GM12878 (cell line): ENCODE measurements at regions of chr16 and their contacts with region 1.

Region 1: GRCh38 chr16:58843675-58844074 is 109.6 kb upstream of the GOT2 start:
- DNase-seq: peak; percentile 12
- ATAC-seq: peak; percentile 81
- H3K4me3 ChIP-seq: no peak overlapping the region
- H3K27ac ChIP-seq: no peak overlapping the region
- H3K4me1 ChIP-seq: no peaks in the 10 kb centered on the region
- H3K27me3 ChIP-seq: no peaks in the 10 kb centered on the region
- CTCF ChIP-seq: peak in 1 of 3 experiments; percentile 12; a peak in 1 of 6 replicates
- EP300 ChIP-seq: no peak
- POLR2A ChIP-seq: no peak
- RAD21 ChIP-seq: peak; percentile 66

Region 2: DNA sequence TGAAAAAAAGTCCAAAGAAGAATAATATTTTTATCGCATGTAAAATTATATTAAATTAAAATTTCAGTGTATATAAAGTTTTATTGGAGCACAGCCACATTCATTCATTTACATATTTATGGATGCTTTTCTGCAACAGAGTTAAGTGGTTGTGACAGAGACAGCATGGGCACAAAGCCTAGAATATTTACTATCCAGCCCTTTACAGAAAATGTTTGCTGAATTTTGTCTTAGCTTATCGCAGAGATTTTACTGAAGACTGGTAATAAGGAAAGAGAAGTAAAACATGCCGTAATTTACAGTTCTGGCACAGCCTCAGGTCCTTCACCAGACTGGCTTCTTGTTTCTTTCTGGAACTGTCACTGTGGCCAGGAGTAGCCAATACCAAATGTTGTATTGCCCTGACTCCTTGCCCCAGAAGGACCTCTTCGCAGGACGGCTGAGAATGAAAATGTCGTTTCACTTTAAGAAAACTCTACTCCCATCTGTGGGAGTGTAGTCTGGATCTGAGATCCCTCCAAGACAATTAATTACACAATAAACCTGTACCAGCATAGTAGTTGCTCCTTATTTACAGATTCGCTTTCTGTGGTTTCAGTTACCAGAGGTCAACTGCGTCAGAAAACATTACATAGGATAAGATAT is 14.7 kb before region 1 on chr16:
- CTCF ChIA-PET with region 1: interaction called, 5 read pairs
- POLR2A ChIA-PET with region 1: no interaction called
- RAD21 ChIA-PET with region 1: interaction called, 4 read pairs
- SMC1A ChIA-PET with region 1: interaction called, 12 read pairs
- in situ Hi-C with region 1: no loop called
- intact Hi-C with region 1: no loop called
- DNase-seq: no peak
- ATAC-seq: no peak
- H3K4me3 ChIP-seq: no peak overlapping the region
- H3K27ac ChIP-seq: no peak overlapping the region
- H3K4me1 ChIP-seq: no peaks in the 10 kb centered on the region
- H3K27me3 ChIP-seq: no peaks in the 10 kb centered on the region
- CTCF ChIP-seq: no peak
- EP300 ChIP-seq: no peak
- POLR2A ChIP-seq: no peak
- RAD21 ChIP-seq: no peak

Region 3: GRCh38 chr16:58859958-58860669 is 16.4 kb after region 1 on chr16:
- CTCF ChIA-PET with region 1: interaction called, 55 read pairs
- POLR2A ChIA-PET with region 1: no interaction called
- RAD21 ChIA-PET with region 1: interaction called, 29 read pairs
- SMC1A ChIA-PET with region 1: interaction called, 21 read pairs
- in situ Hi-C with region 1: no loop called
- intact Hi-C with region 1: no loop called
- DNase-seq: no peak
- ATAC-seq: no peak
- H3K4me3 ChIP-seq: no peak overlapping the region
- H3K27ac ChIP-seq: no peak overlapping the region
- H3K4me1 ChIP-seq: no peaks in the 10 kb centered on the region
- H3K27me3 ChIP-seq: no peaks in the 10 kb centered on the region
- CTCF ChIP-seq: no peak
- EP300 ChIP-seq: no peak
- POLR2A ChIP-seq: no peak
- RAD21 ChIP-seq: no peak

Region 4: GRCh38 chr16:59047114-59047513 is 203.4 kb after region 1 on chr16:
- CTCF ChIA-PET with region 1: no interaction called
- POLR2A ChIA-PET with region 1: no interaction called
- RAD21 ChIA-PET with region 1: interaction called, 4 read pairs
- SMC1A ChIA-PET with region 1: no interaction called
- in situ Hi-C with region 1: no loop called
- intact Hi-C with region 1: loop called (anchors 10 kb)
- DNase-seq: no peak
- ATAC-seq: peak; percentile 55; the same call in 2 of the 3 replicates
- H3K4me3 ChIP-seq: no peak overlapping the region
- H3K27ac ChIP-seq: no peak overlapping the region
- H3K4me1 ChIP-seq: no peaks in the 10 kb centered on the region
- H3K27me3 ChIP-seq: no peaks in the 10 kb centered on the region
- CTCF ChIP-seq: no peak
- EP300 ChIP-seq: no peak
- POLR2A ChIP-seq: no peak
- RAD21 ChIP-seq: no peak

Region 5: GRCh38 chr16:59259074-59259949 is 415.6 kb after region 1 on chr16:
- CTCF ChIA-PET with region 1: no interaction called
- POLR2A ChIA-PET with region 1: no interaction called
- RAD21 ChIA-PET with region 1: no interaction called
- SMC1A ChIA-PET with region 1: no interaction called
- in situ Hi-C with region 1: no loop called
- intact Hi-C with region 1: loop called (anchors 10 kb)
- DNase-seq: no peak
- ATAC-seq: no peak
- H3K4me3 ChIP-seq: no peak overlapping the region
- H3K27ac ChIP-seq: no peak overlapping the region
- H3K4me1 ChIP-seq: no peaks in the 10 kb centered on the region
- H3K27me3 ChIP-seq: no peaks in the 10 kb centered on the region
- CTCF ChIP-seq: no peak
- EP300 ChIP-seq: no peak
- POLR2A ChIP-seq: no peak
- RAD21 ChIP-seq: no peak